RWPE1 (cell line): ENCODE measurements at regions of chr4 and their contacts with region 1.

Region 1: GRCh38 chr4:89700769-89701423 is 136.1 kb downstream of the SNCA start:
- DNase-seq: no peak
- H3K27ac ChIP-seq: no peak overlapping the region
- CTCF ChIP-seq: no peak

Region 2: GRCh38 chr4:89737888-89738287 is 37.0 kb after region 1 on chr4:
- CTCF ChIA-PET with region 1: no interaction called
- POLR2A ChIA-PET with region 1: interaction called, 12 read pairs
- DNase-seq: peak; percentile 76
- H3K27ac ChIP-seq: peak overlapping the region; percentile 80
- CTCF ChIP-seq: no peak

Region 3: GRCh38 chr4:89837993-89838390 is 137.1 kb after region 1 on chr4:
- CTCF ChIA-PET with region 1: no interaction called
- POLR2A ChIA-PET with region 1: interaction called, 10 read pairs
- DNase-seq: no peak
- H3K27ac ChIP-seq: peak overlapping the region; percentile 81
- CTCF ChIP-seq: no peak